Activated T-helper 1 cell treated with anti-CD3 and anti-CD28 coated beads, Interleukin-12 subunit alpha, Interleukin-12 subunit beta, Interleukin-2, Interleukin-4 antibody, amounts not matched to agents 30 ng/mL and 10 ng/mL and 1 ng/mL, durations not matched to agents 14 hours and 24 hours and 36 hours (primary cell): ENCODE measurements at regions of chr6 and their contacts with region 1.

Region 1: DNA sequence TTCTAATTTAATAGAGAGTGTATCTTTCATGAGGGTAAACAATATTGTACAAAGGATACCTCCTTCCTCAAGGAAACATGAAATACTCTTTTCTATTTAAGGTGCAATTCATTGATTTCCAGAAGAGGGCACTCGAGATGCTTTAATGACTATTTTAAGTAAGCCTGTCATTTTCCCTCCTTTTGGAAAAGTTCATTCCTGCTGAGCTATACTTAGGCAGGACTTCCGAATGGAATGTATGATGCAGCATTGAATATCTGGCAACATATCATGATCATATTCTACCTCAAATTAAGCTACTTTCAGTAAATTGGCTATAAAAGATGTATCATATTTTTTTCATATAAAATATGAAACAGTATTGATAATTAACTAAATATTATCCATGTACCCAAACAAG is 5.0 kb downstream of the DST start:
- DNase-seq: no peak
- H3K4me3 Mint-ChIP-seq: no peak overlapping the region
- H3K27ac Mint-ChIP-seq: no peak overlapping the region
- H3K4me1 Mint-ChIP-seq: no peaks in the 10 kb centered on the region
- H3K27me3 Mint-ChIP-seq: no peaks in the 10 kb centered on the region

Region 2: DNA sequence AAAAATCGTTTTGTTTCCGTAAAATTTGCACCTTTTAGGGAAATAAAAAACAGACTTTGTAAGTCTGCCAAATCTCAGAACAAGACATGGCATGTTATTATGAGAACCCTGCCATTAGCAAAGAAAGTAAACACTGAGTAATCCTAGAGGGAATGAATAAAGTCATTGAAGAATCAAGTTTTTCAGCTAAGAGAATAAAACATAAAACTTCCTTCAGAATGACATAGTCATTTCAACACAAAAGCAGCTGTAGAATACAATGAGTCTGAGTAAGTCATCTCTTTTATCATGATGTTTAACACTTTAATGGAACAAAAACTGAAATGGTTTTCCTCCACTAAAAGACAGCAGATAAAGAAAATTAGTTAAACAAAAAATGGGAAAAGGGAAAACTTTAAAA is 15.4 kb after region 1 on chr6:
- intact Hi-C with region 1: no loop called
- DNase-seq: no peak
- H3K4me3 Mint-ChIP-seq: no peak overlapping the region
- H3K27ac Mint-ChIP-seq: no peak overlapping the region
- H3K4me1 Mint-ChIP-seq: no peaks in the 10 kb centered on the region
- H3K27me3 Mint-ChIP-seq: peaks cover 3% of the 10 kb centered on the region

Region 3: DNA sequence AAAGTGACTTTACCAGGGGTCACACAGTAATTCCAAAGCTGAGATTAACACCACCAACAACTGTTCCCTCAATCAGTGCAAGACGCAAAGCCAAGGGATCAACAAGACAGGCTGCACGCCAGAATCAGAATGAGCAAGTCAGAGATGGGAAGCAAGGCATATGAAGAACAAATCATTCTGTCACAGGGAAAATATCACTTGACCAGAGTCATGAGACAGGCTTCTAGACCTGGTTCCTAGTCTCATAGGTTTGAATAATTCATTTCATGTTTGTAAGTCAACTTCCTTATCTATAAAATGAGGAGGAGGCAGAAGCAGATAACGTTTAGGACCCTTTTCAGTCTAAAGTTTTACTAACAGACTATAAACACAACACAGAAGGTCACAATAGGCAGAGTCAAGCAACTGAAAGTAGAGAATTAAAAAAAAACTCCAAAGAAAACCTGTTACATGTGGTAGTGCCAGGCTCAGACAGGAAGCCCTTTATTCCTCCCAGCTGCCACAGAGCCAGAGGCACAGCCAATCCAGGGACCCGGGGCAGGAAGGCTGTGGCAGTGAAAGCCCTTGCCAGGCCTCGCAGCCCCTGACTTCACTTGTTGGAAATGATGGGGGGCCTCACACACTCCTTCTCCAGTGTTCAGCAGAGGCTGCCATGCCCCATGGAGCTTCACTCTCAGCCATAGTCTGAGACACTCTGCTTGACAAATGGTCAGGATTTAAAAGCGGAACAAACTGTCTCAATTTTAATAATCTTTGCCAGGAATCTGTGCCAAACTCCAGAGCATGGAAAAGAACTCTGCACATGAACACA is 34.2 kb after region 1 on chr6:
- intact Hi-C with region 1: loop called (anchors 2 kb)
- DNase-seq: no peak
- H3K4me3 Mint-ChIP-seq: no peak overlapping the region
- H3K27ac Mint-ChIP-seq: no peak overlapping the region
- H3K4me1 Mint-ChIP-seq: no peaks in the 10 kb centered on the region
- H3K27me3 Mint-ChIP-seq: no peaks in the 10 kb centered on the region

Region 4: DNA sequence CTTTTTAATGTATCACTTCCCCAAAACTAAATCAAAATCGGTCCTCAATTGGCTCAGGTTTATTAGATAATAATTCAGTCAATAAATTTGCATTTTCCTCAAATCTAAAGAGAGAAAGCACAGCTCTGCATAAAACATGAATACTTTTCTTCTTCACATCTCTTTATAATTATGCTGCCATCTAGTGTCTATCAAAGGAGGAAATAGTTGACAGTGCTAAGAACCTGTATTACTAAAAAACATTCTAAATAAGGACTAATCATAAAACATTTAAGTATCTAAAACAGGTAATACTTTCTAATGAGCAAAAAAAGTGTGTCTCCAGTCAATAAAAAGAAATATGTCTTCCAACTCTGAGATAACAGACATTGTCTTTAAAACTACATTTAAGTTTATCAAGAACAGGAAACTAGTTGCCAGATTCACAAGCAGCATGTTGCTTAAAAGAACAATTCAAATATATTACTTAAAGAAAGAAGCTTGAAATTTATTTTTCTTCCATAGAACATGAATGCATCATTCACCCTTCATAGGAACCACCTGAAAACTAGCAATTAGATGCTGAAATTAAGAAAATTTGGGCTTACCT is 61.5 kb after region 1 on chr6:
- intact Hi-C with region 1: loop called (anchors 1 kb)
- DNase-seq: no peak
- H3K4me3 Mint-ChIP-seq: no peak overlapping the region
- H3K27ac Mint-ChIP-seq: no peak overlapping the region
- H3K4me1 Mint-ChIP-seq: no peaks in the 10 kb centered on the region
- H3K27me3 Mint-ChIP-seq: no peaks in the 10 kb centered on the region